ENCODE measurements at regions of chrX and their contacts with region 1.

Region 1: DNA sequence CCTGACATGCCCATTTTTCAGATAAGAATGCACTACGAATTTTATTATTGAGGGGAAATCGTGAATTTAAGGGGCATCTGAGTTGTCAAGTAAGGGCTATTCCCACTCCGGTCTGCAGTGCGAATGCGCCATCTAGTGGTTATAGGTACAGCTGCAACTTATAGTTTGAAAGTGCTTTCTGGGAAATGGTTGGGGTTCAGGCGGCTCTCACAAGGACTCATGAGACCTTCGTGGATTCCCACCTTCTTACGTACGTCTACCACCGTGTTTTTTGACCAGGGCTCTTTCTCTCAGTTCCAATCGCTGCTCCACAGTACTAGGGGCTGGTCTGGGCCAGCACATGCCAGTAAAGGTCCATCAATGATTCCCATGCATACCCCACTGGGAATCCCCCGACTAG is 12.3 kb downstream of the MSL3 start:
- DNase-seq: peak; percentile 77
- ATAC-seq: peak; percentile 74
- H3K4me3 ChIP-seq: no peak overlapping the region
- H3K4me3 Mint-ChIP-seq: no peak overlapping the region
- H3K27ac ChIP-seq: no peak overlapping the region
- H3K27ac Mint-ChIP-seq: peak overlapping the region; percentile 61
- H3K4me1 ChIP-seq: peaks cover 4 to 17% of the 10 kb centered on the region in 2 donors
- H3K4me1 Mint-ChIP-seq: peaks cover 26% of the 10 kb centered on the region
- H3K27me3 ChIP-seq: no peaks in the 10 kb centered on the region
- H3K27me3 Mint-ChIP-seq: no peaks in the 10 kb centered on the region
- CTCF ChIP-seq: peak; percentile 81

Region 2: DNA sequence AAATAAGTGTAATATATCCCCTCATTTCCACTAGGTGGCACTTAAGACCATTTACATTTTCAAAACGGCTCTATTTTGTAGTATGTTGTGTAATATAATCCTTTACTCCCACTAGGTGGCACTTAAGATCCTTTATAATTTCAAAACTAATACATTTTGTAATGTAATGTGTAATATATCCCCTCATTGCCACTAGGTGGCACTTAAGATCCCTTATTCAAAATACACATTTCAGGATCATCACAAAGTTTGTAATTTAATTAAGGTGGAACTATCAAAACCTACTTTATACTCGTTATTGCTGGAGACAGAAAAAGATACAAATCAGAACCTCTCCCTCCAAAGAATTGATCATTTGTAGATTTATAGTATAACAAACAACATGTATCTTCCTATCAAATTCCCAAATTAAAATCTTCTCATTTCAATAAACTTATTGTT is 237.1 kb before region 1 on chrX:
- CTCF ChIA-PET with region 1: interaction called, 10 read pairs
- POLR2A ChIA-PET with region 1: no interaction called
- intact Hi-C with region 1: loop called (anchors 1 kb)
- DNase-seq: peak; percentile 75
- ATAC-seq: peak; percentile 99
- H3K4me3 ChIP-seq: no peak overlapping the region
- H3K4me3 Mint-ChIP-seq: no peak overlapping the region
- H3K27ac ChIP-seq: no peak overlapping the region
- H3K27ac Mint-ChIP-seq: no peak overlapping the region
- H3K4me1 ChIP-seq: no peaks in the 10 kb centered on the region
- H3K4me1 Mint-ChIP-seq: peaks cover 2% of the 10 kb centered on the region
- H3K27me3 ChIP-seq: peaks cover 0 to 5% (median 0%) of the 10 kb centered on the region in 4 experiments
- H3K27me3 Mint-ChIP-seq: no peaks in the 10 kb centered on the region
- CTCF ChIP-seq: peak; percentile 90

Region 3: DNA sequence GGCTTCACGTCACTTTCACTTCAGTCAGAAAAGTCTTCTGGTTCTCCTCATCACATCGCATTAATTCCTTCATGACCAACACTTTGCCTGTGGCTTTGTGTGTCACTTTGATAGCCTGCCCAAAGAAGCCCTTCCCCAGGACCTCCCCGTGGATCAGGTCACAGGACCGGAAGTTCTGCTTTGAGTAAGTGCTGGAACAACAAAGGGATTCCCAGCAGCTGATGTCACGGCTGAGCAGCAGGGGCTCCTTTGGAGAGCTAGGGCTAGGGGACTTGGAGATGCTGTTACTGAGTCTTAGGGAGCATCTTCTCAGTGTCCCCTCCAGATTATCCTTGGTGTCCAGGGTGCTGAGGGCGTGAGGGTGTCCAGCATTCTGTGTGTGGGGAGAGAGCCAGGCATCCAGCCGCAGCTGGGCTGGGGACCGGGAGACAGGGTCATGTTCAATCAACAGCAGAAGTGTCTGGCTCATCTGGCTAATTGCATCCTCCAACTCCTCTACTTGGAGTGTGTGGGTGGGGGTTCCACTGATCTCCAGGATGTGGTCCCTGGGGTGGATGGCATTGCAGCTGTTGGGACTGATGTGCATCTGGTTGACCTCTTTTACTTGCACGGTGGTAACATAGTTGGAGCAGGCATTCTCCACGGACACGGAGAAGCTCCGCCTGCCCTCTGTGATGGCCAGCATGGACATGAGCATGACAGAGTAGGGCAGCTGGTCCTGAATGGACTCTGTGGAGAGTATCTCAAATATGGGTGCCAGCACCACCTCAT is 65.4 kb before region 1 on chrX:
- CTCF ChIA-PET with region 1: no interaction called
- POLR2A ChIA-PET with region 1: no interaction called
- intact Hi-C with region 1: no loop called
- DNase-seq: no peak
- ATAC-seq: no peak
- H3K4me3 ChIP-seq: no peak overlapping the region
- H3K4me3 Mint-ChIP-seq: no peak overlapping the region
- H3K27ac ChIP-seq: no peak overlapping the region
- H3K27ac Mint-ChIP-seq: no peak overlapping the region
- H3K4me1 ChIP-seq: no peaks in the 10 kb centered on the region
- H3K4me1 Mint-ChIP-seq: no peaks in the 10 kb centered on the region
- H3K27me3 ChIP-seq: no peaks in the 10 kb centered on the region
- H3K27me3 Mint-ChIP-seq: peaks cover 7% of the 10 kb centered on the region
- CTCF ChIP-seq: no peak

Region 4: GRCh38 chrX:11724122-11725017 is 46.0 kb before region 1 on chrX:
- CTCF ChIA-PET with region 1: interaction called, 3 read pairs
- POLR2A ChIA-PET with region 1: no interaction called
- intact Hi-C with region 1: loop called (anchors 1 kb)
- DNase-seq: peak; percentile 36
- ATAC-seq: peak; percentile 47
- H3K4me3 ChIP-seq: no peak overlapping the region
- H3K4me3 Mint-ChIP-seq: no peak overlapping the region
- H3K27ac ChIP-seq: no peak overlapping the region
- H3K27ac Mint-ChIP-seq: no peak overlapping the region
- H3K4me1 ChIP-seq: no peaks in the 10 kb centered on the region
- H3K4me1 Mint-ChIP-seq: no peaks in the 10 kb centered on the region
- H3K27me3 ChIP-seq: no peaks in the 10 kb centered on the region
- H3K27me3 Mint-ChIP-seq: peaks cover 10% of the 10 kb centered on the region
- CTCF ChIP-seq: peak; percentile 68

Region 5: DNA sequence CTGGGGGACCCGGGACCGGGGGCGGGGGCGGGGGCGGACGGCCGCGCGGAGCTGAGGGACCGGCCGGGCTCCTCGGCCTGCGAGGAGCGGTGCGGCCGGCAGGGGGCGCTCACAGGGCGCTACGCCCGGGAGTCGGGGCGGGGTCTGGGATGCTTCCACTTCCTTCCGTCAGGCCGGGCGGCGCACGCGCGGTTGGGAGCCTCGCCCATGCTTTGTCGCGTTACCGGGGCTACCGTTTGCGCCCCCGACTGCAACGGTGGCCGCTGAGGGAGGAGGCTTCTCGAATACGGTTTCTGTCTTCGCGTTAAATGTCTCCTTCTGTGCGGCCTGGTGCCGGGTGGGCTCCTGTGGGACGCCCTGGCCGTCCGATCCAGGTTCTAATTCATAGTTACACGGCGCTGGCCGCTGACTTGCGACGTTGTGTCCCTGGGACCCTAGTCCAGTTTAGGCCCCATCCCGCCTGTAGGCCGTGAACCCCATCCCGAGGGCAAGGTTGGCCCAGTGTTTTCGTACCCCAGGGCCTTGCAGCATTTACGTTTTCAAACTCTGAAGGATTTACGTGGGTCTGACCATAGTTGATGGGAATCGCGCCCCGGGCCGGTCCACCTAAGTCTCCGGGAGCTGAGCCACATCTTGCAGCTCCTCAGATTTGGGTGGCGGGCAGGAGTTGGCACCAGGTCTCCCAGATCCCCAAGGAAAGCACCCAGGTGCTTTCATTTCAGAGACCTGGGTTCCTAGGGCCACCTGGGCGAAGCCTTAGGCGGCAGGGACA is 11.7 kb before region 1 on chrX:
- CTCF ChIA-PET with region 1: interaction called, 31 read pairs
- POLR2A ChIA-PET with region 1: no interaction called
- intact Hi-C with region 1: loop called (anchors 1 kb)
- DNase-seq: peak; percentile 90
- ATAC-seq: peak; percentile 66
- H3K4me3 ChIP-seq: peak overlapping the region; percentile 70 to 86 (median 74)
- H3K4me3 Mint-ChIP-seq: peak overlapping the region; percentile 93
- H3K27ac ChIP-seq: peak overlapping the region; percentile 89
- H3K27ac Mint-ChIP-seq: peak overlapping the region; percentile 86
- H3K4me1 ChIP-seq: peaks cover 7 to 22% of the 10 kb centered on the region in 2 donors
- H3K4me1 Mint-ChIP-seq: peaks cover 32% of the 10 kb centered on the region
- H3K27me3 ChIP-seq: no peaks in the 10 kb centered on the region
- H3K27me3 Mint-ChIP-seq: no peaks in the 10 kb centered on the region
- CTCF ChIP-seq: peak; percentile 68

Region 6: GRCh38 chrX:11787564-11787963 is 17.2 kb after region 1 on chrX:
- CTCF ChIA-PET with region 1: interaction called, 13 read pairs
- POLR2A ChIA-PET with region 1: no interaction called
- intact Hi-C with region 1: no loop called
- DNase-seq: peak; percentile 68
- ATAC-seq: peak; percentile 58
- H3K4me3 ChIP-seq: peak overlapping the region in 3 of 5 experiments; percentile 14 to 24 (median 22)
- H3K4me3 Mint-ChIP-seq: peak overlapping the region; percentile 66
- H3K27ac ChIP-seq: no peak overlapping the region
- H3K27ac Mint-ChIP-seq: no peak overlapping the region
- H3K4me1 ChIP-seq: peaks cover 8 to 9% of the 10 kb centered on the region in 2 donors
- H3K4me1 Mint-ChIP-seq: peaks cover 19% of the 10 kb centered on the region
- H3K27me3 ChIP-seq: no peaks in the 10 kb centered on the region
- H3K27me3 Mint-ChIP-seq: no peaks in the 10 kb centered on the region
- CTCF ChIP-seq: peak; percentile 46

Measured in B cell (primary cell).